Naive thymus-derived CD4-positive, alpha-beta T cell (primary cell): ENCODE measurements at regions of chr5 and their contacts with region 1.

Region 1: GRCh38 chr5:140357726-140358093 is 2.3 kb upstream of the SLC4A9 start:
- DNase-seq: peak; percentile 42 to 73 (median 61)
- ATAC-seq: peak; percentile 97
- H3K4me3 ChIP-seq: peak overlapping the region; percentile 36
- H3K4me3 Mint-ChIP-seq: peak overlapping the region in 9 of 10 donors; percentile 41 to 80 (median 59)
- H3K27ac ChIP-seq: no peak overlapping the region
- H3K27ac Mint-ChIP-seq: peak overlapping the region in 3 of 9 donors; percentile 20 to 47 (median 46)
- H3K4me1 ChIP-seq: peaks cover 8% of the 10 kb centered on the region in 2 donors
- H3K4me1 Mint-ChIP-seq: peaks cover 7 to 18% (median 8%) of the 10 kb centered on the region in 7 donors
- H3K27me3 ChIP-seq: no peaks in the 10 kb centered on the region
- H3K27me3 Mint-ChIP-seq: peaks cover 0 to 10% (median 0%) of the 10 kb centered on the region in 5 donors

Region 2: DNA sequence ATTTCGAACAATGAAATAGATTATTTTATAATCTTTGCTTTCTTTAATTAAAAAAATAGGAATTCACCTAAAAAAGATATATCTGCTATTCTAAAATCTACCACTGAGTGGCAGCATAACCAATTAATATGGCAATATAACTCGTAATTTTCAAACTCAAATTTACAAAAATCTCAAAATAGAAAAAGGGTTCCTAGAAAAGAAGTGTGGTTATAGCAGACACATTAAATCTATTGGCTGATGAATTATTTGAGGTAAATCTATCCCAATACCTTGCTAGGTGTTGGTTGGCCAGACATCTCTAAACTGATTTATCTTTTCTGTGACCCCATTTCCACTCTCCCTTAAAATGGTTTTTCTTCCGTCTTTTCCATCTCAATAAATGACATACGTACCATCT is 284.4 kb before region 1 on chr5:
- CTCF ChIA-PET with region 1: no interaction called
- POLR2A ChIA-PET with region 1: no interaction called
- intact Hi-C with region 1: loop called in 1 of 2 experiments (anchors 10 kb)
- DNase-seq: peak in 6 of 9 donors; percentile 25 to 54 (median 44)
- ATAC-seq: no peak
- H3K4me3 ChIP-seq: no peak overlapping the region
- H3K4me3 Mint-ChIP-seq: no peak overlapping the region
- H3K27ac ChIP-seq: no peak overlapping the region
- H3K27ac Mint-ChIP-seq: no peak overlapping the region
- H3K4me1 ChIP-seq: no peaks in the 10 kb centered on the region
- H3K4me1 Mint-ChIP-seq: no peaks in the 10 kb centered on the region
- H3K27me3 ChIP-seq: no peaks in the 10 kb centered on the region
- H3K27me3 Mint-ChIP-seq: peaks cover 12 to 50% (median 24%) of the 10 kb centered on the region in 5 donors

Region 3: DNA sequence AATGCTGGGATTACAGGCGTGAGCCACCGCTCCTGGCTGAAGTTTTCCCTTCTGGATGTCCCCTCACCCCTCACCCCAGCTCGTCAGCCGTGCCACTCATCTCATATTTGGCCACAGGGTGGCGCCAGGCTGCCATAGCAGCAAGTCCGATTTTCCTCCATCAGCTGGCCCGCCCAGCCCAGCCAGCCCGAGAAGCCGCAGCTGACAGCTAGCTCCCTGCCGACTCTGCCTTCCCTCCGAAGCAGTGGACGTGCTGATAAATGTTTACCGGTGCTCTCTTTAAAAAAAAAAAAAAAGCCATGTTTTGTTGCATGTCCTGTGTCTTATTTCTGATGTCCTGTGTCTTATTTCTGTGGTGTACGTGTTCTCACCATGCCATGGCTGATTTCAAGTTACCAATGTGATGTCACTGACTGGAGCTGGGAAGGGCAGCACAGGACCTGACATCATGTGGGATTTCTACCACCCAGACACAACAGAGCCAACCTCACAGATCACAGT is 113.1 kb before region 1 on chr5:
- CTCF ChIA-PET with region 1: interaction called, 262 read pairs
- POLR2A ChIA-PET with region 1: no interaction called
- intact Hi-C with region 1: loop called (anchors 1 kb)
- DNase-seq: peak; percentile 62 to 82 (median 74)
- ATAC-seq: peak; percentile 87
- H3K4me3 ChIP-seq: no peak overlapping the region
- H3K4me3 Mint-ChIP-seq: peak overlapping the region in 6 of 10 donors; percentile 0 to 55 (median 44)
- H3K27ac ChIP-seq: no peak overlapping the region
- H3K27ac Mint-ChIP-seq: peak overlapping the region in 8 of 9 donors; percentile 41 to 94 (median 77)
- H3K4me1 ChIP-seq: peaks cover 0 to 14% of the 10 kb centered on the region in 2 donors
- H3K4me1 Mint-ChIP-seq: peaks cover 5 to 43% (median 27%) of the 10 kb centered on the region in 7 donors
- H3K27me3 ChIP-seq: no peaks in the 10 kb centered on the region
- H3K27me3 Mint-ChIP-seq: no peaks in the 10 kb centered on the region

Region 4: DNA sequence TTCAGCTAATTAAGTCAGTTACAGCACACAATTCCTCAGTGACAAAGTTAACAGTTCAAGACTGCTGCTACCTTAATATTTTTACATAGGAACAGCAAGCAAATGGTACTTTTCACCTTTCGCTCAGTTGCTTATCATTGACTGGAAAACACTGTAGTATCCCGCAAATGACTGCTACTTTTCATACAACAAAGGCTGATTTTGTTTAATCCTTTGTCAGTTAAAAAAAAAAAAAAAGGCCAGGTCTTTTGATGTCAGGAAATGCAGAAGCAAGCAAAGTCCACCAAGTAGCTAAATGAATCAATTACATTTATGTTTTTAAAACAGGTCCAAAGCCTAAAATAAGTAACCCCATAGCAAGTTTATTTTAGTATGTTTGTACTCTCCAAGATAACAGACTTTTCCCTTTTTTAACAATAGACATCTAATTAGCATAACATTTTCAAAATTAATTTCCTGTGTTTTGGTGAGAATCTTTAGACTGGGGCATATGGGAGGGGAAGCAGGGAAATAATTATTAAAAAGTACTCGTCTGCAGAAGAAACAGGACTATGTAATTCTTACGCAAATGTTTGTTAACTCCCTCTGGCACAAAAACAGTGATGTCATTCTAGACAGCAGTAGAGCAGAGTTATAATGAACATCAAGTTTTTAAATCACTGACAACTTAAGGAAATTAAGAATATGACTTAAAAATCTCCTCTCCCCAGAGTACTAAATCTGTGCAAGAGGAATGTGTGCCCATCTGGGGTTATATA is 64.4 kb before region 1 on chr5:
- CTCF ChIA-PET with region 1: no interaction called
- POLR2A ChIA-PET with region 1: no interaction called
- intact Hi-C with region 1: loop called in 1 of 2 experiments (anchors 2 kb)
- DNase-seq: peak in 5 of 9 donors; percentile 7 to 29 (median 10)
- ATAC-seq: peak; percentile 20
- H3K4me3 ChIP-seq: no peak overlapping the region
- H3K4me3 Mint-ChIP-seq: peak overlapping the region in 9 of 10 donors; percentile 1 to 54 (median 35)
- H3K27ac ChIP-seq: no peak overlapping the region
- H3K27ac Mint-ChIP-seq: peak overlapping the region in 7 of 9 donors; percentile 14 to 78 (median 72)
- H3K4me1 ChIP-seq: peaks cover 0 to 13% of the 10 kb centered on the region in 2 donors
- H3K4me1 Mint-ChIP-seq: peaks cover 40 to 86% (median 78%) of the 10 kb centered on the region in 7 donors
- H3K27me3 ChIP-seq: no peaks in the 10 kb centered on the region
- H3K27me3 Mint-ChIP-seq: no peaks in the 10 kb centered on the region

Region 5: GRCh38 chr5:140346348-140347101 is 11.2 kb before region 1 on chr5 and contains the start of gene HBEGF:
- CTCF ChIA-PET with region 1: interaction called, 10 read pairs
- POLR2A ChIA-PET with region 1: interaction called, 4 read pairs
- intact Hi-C with region 1: loop called in 1 of 2 experiments (anchors 1 kb)
- DNase-seq: peak; percentile 19 to 74 (median 42)
- ATAC-seq: peak; percentile 73
- H3K4me3 ChIP-seq: peak within 1 kb of the TSS; percentile 49
- H3K4me3 Mint-ChIP-seq: peak within 1 kb of the TSS; percentile 73 to 91 (median 84)
- H3K27ac ChIP-seq: peak within 1 kb of the TSS; percentile 57
- H3K27ac Mint-ChIP-seq: peak within 1 kb of the TSS in 8 of 9 donors; percentile 33 to 94 (median 62)
- H3K4me1 ChIP-seq: peaks cover 10 to 40% of the 10 kb centered on the region in 2 donors
- H3K4me1 Mint-ChIP-seq: peaks cover 33 to 68% (median 52%) of the 10 kb centered on the region in 7 donors
- H3K27me3 ChIP-seq: no peaks in the 10 kb centered on the region
- H3K27me3 Mint-ChIP-seq: peaks cover 0 to 17% (median 5%) of the 10 kb centered on the region in 5 donors
- total RNA-seq, gene HBEGF: 0.35 to 95.5 (median 11.6) TPM

Region 6: GRCh38 chr5:140372971-140373487 is 15.3 kb after region 1 on chr5:
- CTCF ChIA-PET with region 1: interaction called, 13 read pairs
- POLR2A ChIA-PET with region 1: no interaction called
- intact Hi-C with region 1: no loop called
- DNase-seq: peak in 6 of 9 donors; percentile 22 to 47 (median 36)
- ATAC-seq: peak; percentile 76
- H3K4me3 ChIP-seq: no peak overlapping the region
- H3K4me3 Mint-ChIP-seq: no peak overlapping the region
- H3K27ac ChIP-seq: no peak overlapping the region
- H3K27ac Mint-ChIP-seq: peak overlapping the region in 1 of 9 donors; percentile 4
- H3K4me1 ChIP-seq: no peaks in the 10 kb centered on the region
- H3K4me1 Mint-ChIP-seq: peaks cover 0 to 8% (median 4%) of the 10 kb centered on the region in 7 donors
- H3K27me3 ChIP-seq: no peaks in the 10 kb centered on the region
- H3K27me3 Mint-ChIP-seq: no peaks in the 10 kb centered on the region

Region 7: GRCh38 chr5:140480310-140481014 is 122.8 kb after region 1 on chr5:
- CTCF ChIA-PET with region 1: no interaction called
- POLR2A ChIA-PET with region 1: no interaction called
- intact Hi-C with region 1: no loop called
- DNase-seq: no peak
- ATAC-seq: no peak
- H3K4me3 ChIP-seq: no peak overlapping the region
- H3K4me3 Mint-ChIP-seq: no peak overlapping the region
- H3K27ac ChIP-seq: no peak overlapping the region
- H3K27ac Mint-ChIP-seq: peak overlapping the region in 5 of 9 donors; percentile 9 to 72 (median 56)
- H3K4me1 ChIP-seq: no peaks in the 10 kb centered on the region
- H3K4me1 Mint-ChIP-seq: peaks cover 0 to 12% (median 6%) of the 10 kb centered on the region in 7 donors
- H3K27me3 ChIP-seq: no peaks in the 10 kb centered on the region
- H3K27me3 Mint-ChIP-seq: no peaks in the 10 kb centered on the region